ENCODE measurements at regions of chr12 and their contacts with region 1.

Region 1: DNA sequence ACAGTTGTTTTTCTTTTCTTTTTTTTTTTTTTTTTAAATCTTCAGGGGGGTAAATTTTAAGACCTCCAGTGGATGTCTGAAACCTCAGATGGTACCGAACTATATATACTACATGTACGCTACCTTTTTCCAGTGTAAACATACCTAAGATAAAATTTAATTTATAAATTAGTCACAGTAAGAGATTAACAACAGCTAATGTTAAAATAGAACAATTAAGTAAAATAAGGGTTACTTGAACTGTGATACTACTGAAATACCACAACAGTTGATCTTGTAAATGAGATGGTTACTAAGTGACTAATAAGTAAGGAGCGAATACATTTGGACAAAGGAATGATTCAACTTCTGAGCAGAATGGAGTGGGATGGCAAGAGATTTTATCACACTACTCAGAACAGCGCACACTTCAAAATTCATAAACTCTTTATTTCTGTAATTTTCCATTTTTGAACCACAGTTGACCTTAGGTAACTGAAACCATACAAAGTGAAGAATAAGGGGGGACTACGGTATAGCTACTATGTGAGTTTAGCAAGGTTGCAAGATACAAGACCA is 80.5 kb upstream of the PCED1B start:
- DNase-seq: peak in 1 of 2 experiments; percentile 14
- ATAC-seq: peak in 1 of 2 experiments; percentile 54; a peak in 2 of 6 replicates
- H3K4me3 ChIP-seq: no peak overlapping the region
- H3K27ac ChIP-seq: no peak overlapping the region
- H3K4me1 ChIP-seq: no peaks in the 10 kb centered on the region
- CTCF ChIP-seq: no peak
- EP300 ChIP-seq: no peak
- POLR2A ChIP-seq: no peak
- RAD21 ChIP-seq: no peak

Region 2: GRCh38 chr12:46825591-46826414 is 173.1 kb before region 1 on chr12 and contains the start of gene SLC38A4:
- CTCF ChIA-PET with region 1: no interaction called
- POLR2A ChIA-PET with region 1: no interaction called
- DNase-seq: no peak
- ATAC-seq: peak in 1 of 2 experiments; percentile 25; a peak in 1 of 6 replicates
- H3K4me3 ChIP-seq: no peak within 1 kb of the TSS
- H3K27ac ChIP-seq: no peak within 1 kb of the TSS
- H3K4me1 ChIP-seq: no peaks in the 10 kb centered on the region
- CTCF ChIP-seq: no peak
- EP300 ChIP-seq: no peak
- POLR2A ChIP-seq: no peak
- RAD21 ChIP-seq: no peak
- polyA plus RNA-seq, gene SLC38A4: 0.09 TPM in 1 of 2 replicates, not detected in the other

Region 3: DNA sequence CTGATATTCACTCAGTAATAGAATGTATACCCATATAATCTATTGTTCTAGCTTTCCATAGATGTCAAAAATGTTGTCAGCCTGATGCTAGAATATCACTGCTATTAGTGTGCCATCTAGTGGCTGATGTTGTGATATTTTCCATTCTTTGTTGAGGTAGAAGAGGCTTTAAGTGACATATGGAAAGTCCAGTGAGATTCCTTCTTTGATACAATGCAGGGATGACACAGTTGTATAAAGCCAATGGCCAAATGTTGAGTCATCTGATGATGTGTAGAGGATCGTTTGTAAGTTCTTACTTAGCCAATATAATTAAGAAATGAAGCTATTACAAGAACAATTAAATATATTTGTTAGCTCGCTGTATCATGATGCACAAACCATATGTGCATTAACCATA is 22.4 kb after region 1 on chr12:
- CTCF ChIA-PET with region 1: interaction called, 16 read pairs
- POLR2A ChIA-PET with region 1: no interaction called
- DNase-seq: peak; percentile 50 to 88
- ATAC-seq: peak; percentile 72 to 86
- H3K4me3 ChIP-seq: no peak overlapping the region
- H3K27ac ChIP-seq: no peak overlapping the region
- H3K4me1 ChIP-seq: peaks cover 43% of the 10 kb centered on the region
- CTCF ChIP-seq: peak; percentile 93
- EP300 ChIP-seq: no peak
- POLR2A ChIP-seq: no peak
- RAD21 ChIP-seq: peak; percentile 89 to 92

Measured in A549 (cell line).